Natural killer cell (primary cell): ENCODE measurements at regions of chr2 and their contacts with region 1.

Region 1: DNA sequence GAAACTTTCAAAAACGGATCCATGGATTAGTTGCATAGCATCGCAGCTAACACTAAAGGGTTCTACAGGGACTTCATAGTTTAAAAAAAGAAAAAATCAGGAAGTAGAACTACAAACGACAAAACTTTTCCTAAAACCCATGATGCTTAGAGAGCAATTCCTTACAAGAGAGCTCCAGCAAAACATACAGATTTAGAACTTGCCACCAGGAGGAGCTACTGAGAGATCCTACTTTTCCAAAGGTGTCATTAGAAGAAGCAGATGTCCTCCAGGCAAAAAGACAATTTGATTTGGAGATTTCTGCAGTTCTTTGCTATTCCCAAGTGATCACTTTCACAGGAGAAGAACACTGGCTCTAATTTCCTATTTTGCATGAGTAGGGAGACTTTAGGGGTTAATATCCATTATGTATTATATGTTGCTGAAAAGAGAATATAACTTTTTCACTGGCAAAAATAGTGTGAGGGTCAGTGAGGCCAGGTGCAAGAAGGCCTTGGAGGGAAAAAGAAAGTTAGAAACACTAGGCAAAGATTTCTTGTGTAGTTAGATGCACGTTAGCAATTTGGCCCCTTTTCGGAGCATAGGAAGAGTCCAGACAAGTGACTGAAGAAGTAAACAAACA is 436.2 kb downstream of the SUCLG1 start:
- DNase-seq: peak in 1 of 2 donors; percentile 54
- ATAC-seq: no peak
- H3K4me3 ChIP-seq: no peak overlapping the region
- H3K4me3 Mint-ChIP-seq: no peak overlapping the region
- H3K27ac ChIP-seq: no peak overlapping the region
- H3K27ac Mint-ChIP-seq: no peak overlapping the region
- H3K4me1 ChIP-seq: no peaks in the 10 kb centered on the region
- H3K4me1 Mint-ChIP-seq: no peaks in the 10 kb centered on the region
- H3K27me3 ChIP-seq: no peaks in the 10 kb centered on the region
- H3K27me3 Mint-ChIP-seq: peaks cover 2 to 9% of the 10 kb centered on the region in 2 donors
- CTCF ChIP-seq: peak; percentile 56

Region 2: DNA sequence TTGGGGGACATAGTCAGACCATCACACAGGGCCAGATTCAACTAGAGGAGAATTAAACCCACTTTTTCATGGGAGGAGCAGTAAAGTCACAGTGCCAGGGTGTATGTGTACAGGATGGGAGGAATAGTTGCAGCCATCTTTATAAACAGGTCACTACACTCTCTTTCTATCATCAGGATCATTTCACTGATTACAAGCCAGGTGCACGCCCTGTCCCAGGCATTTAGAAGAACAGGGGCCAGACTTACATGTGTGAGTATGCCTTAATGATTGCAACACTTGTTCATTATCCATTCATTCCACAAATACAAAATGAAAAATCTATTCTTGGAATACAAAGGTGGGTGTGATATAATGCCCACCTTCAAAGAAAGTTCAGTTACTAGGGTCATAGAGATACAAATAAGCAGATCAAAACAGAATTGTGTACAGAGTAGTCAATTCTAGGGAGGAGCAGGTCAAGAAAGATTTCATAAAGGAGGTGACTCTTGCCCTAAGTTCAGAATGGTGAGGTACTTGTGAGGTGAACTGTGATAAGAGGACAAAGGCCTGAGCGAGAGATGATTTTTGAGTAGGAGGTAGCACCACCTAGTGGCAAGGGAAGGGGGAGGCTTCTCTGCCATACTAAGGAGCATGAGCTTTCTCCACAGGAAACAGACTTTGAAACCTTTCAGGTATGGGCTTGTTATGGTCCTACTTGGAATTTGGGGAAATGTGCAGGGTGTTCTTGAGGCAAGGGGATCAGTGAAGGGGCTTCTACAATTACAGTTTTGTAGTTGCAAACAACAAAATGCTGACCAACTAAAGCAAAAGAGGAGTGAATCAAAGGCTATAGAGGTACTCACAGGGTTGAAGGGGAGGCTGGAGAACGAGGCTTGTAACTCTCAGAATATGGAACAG is 279.8 kb after region 1 on chr2:
- intact Hi-C with region 1: loop called (anchors 1 kb)
- DNase-seq: peak in 1 of 2 donors; percentile 65
- ATAC-seq: peak; percentile 70 to 85 (median 73)
- H3K4me3 ChIP-seq: no peak overlapping the region
- H3K4me3 Mint-ChIP-seq: no peak overlapping the region
- H3K27ac ChIP-seq: no peak overlapping the region
- H3K27ac Mint-ChIP-seq: no peak overlapping the region
- H3K4me1 ChIP-seq: no peaks in the 10 kb centered on the region
- H3K4me1 Mint-ChIP-seq: peaks cover 0 to 8% of the 10 kb centered on the region in 2 donors
- H3K27me3 ChIP-seq: no peaks in the 10 kb centered on the region
- H3K27me3 Mint-ChIP-seq: peaks cover 0 to 9% of the 10 kb centered on the region in 2 donors
- CTCF ChIP-seq: peak; percentile 71